Mammary epithelial cell (primary cell): ENCODE measurements at regions of chr5 and their contacts with region 1.

Region 1: GRCh38 chr5:157858527-157859226 is at the start of gene CLINT1:
- DNase-seq: peak; percentile 84
- H3K4me3 ChIP-seq: peak within 1 kb of the TSS; percentile 94 to 99 (median 97)
- H3K27ac ChIP-seq: peak within 1 kb of the TSS; percentile 82
- H3K4me1 ChIP-seq: peaks cover 7% of the 10 kb centered on the region
- H3K27me3 ChIP-seq: no peaks in the 10 kb centered on the region
- CTCF ChIP-seq: no peak
- total RNA-seq, gene CLINT1: 77.2 to 127 TPM

Region 2: GRCh38 chr5:157870837-157871834 is 12.5 kb after region 1 on chr5:
- CTCF ChIA-PET with region 1: no interaction called
- dilution Hi-C with region 1: no loop called
- in situ Hi-C with region 1: no loop called
- intact Hi-C with region 1: loop called (anchors 1 kb)
- DNase-seq: peak; percentile 99
- H3K4me3 ChIP-seq: peak overlapping the region in 1 of 3 experiments; percentile 9
- H3K27ac ChIP-seq: peak overlapping the region; percentile 91
- H3K4me1 ChIP-seq: peaks cover 9% of the 10 kb centered on the region
- H3K27me3 ChIP-seq: no peaks in the 10 kb centered on the region
- CTCF ChIP-seq: peak in 1 of 2 donors; percentile 16

Region 3: GRCh38 chr5:157917899-157918809 is 59.5 kb after region 1 on chr5:
- CTCF ChIA-PET with region 1: no interaction called
- dilution Hi-C with region 1: no loop called
- in situ Hi-C with region 1: no loop called
- intact Hi-C with region 1: loop called (anchors 1 kb)
- DNase-seq: peak; percentile 73
- H3K4me3 ChIP-seq: no peak overlapping the region
- H3K27ac ChIP-seq: no peak overlapping the region
- H3K4me1 ChIP-seq: no peaks in the 10 kb centered on the region
- H3K27me3 ChIP-seq: no peaks in the 10 kb centered on the region
- CTCF ChIP-seq: peak; percentile 57 to 77

Region 4: DNA sequence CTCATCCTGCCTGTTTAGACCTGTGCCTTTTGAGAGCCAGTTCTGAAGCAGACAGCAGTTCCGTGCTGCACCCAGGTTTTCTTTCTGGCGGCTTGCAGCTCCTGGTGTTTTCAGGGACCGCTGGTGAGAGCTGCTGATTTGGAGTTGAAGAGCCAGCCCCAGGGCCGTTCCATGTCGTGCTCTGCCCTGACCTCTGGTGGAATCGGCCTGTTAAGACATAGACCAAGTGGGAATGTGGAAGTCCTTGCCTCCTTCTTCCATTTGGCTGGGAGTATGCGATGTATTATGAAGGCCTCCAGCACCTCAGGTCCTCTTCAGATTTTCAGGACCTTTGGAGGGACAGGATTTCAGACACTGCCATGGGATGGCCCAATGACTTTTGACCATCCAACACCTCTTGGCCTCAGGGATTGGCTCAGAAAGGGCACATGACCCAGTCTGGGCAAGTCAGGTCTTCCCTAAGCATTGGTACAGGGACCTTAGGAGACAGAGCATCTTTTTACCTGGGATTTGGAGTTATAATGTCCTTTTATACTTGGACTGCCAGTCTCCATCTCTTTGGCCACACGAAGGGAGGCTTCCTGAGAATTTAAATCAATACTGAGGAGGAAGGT is 136.3 kb after region 1 on chr5:
- CTCF ChIA-PET with region 1: interaction called, 6 read pairs
- dilution Hi-C with region 1: no loop called
- in situ Hi-C with region 1: no loop called
- intact Hi-C with region 1: loop called (anchors 1 kb)
- DNase-seq: peak; percentile 67
- H3K4me3 ChIP-seq: no peak overlapping the region
- H3K27ac ChIP-seq: no peak overlapping the region
- H3K4me1 ChIP-seq: no peaks in the 10 kb centered on the region
- H3K27me3 ChIP-seq: no peaks in the 10 kb centered on the region
- CTCF ChIP-seq: peak; percentile 69 to 90

Region 5: GRCh38 chr5:159106569-159107282 is 1248.0 kb after region 1 on chr5:
- CTCF ChIA-PET with region 1: no interaction called
- dilution Hi-C with region 1: no loop called
- in situ Hi-C with region 1: no loop called
- intact Hi-C with region 1: loop called (anchors 10 kb)
- DNase-seq: peak; percentile 38
- H3K4me3 ChIP-seq: peak overlapping the region in 2 of 3 experiments; percentile 14 to 28
- H3K27ac ChIP-seq: no peak overlapping the region
- H3K4me1 ChIP-seq: peaks cover 4% of the 10 kb centered on the region
- H3K27me3 ChIP-seq: peaks cover 30% of the 10 kb centered on the region
- CTCF ChIP-seq: peak; percentile 88 to 90